ENCODE measurements at regions of chrX and their contacts with region 1.

Region 1: DNA sequence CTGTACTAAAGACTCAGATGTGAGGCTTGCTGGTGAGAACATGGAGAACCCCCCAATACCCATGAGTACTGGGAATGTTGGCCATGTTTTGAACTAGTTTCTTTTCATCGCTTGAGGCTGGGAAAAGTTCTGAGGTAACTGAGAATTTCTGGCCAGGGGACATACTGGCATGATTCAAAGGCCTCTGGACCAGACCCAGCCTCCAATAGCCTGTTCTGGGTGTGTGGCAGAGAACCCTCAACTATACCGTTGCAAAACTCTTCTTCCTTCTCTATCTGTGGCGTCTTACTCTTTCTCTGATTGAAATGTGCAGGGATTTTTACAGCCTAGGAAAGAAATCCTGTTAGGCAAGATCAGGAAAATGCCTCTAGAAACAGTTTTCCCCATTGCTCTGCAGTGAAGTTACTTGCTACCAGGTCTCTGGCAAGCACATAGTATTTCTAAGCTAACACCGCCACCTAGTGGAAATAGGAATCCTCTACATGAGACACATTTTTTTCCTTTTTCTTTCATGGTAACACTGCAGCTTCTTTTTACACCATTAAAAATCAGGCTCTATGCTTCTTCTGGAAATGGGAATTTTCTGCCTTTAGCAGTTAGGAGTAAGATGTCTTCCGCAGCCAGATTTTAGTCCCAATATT is 170.7 kb upstream of the ZCCHC13 start:
- DNase-seq: peak; percentile 71

Region 2: DNA sequence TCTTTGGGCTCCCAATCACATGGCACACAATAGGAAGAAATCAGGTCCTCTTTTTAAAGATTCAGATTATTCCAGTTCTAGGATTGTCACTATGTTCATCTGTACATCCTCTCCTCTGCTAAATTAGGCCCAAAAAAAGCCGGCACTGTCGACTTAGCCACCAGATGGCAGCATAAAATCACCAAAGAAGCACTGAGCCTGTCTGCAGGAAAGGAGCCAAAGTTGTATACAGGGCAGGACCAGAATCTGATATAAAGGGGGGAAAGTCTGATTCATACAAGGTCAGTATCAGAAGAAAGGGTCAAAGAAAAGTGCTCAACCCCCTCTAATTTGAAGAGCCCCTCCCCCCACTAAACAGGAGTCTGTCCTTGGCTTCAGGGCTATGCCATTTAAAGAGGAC is 277.7 kb before region 1 on chrX:
- in situ Hi-C with region 1: loop called (anchors 25 kb)
- DNase-seq: peak; percentile 87